HEK293 (cell line): ENCODE measurements at regions of chr17 and their contacts with region 1.

Region 1: DNA sequence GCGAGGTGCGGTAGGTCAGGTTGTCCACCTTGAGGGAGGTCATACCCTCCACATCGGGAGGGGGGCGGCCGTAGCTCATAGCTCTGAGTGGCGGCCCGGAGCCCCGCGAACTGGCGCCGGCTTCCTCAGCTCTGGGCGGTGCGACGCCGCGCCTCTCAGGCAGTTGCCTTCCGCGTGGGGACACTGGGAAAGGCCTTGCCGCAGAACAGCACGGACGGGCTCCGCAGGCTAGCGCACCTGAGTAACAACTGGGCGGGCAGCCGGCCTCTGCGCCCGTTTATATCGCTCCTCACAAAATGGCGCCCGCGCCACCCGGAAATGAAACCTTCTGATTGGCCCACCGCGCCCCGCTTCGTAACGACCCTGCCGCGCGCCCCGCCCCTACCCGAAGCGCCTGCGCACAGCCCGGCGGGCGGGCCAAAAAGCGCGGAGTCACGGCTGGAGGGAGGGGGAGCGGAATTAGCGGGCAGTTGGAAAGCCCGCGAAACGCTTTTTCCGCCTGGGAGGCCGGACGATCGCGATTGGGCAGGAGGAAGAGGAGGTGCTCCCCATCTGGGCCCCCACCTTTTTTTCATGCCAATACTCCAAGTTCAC is at the start of gene SRSF2:
- H3K4me3 ChIP-seq: peak within 1 kb of the TSS; percentile 81
- H3K27ac ChIP-seq: peak within 1 kb of the TSS; percentile 99
- H3K4me1 ChIP-seq: peaks cover 19% of the 10 kb centered on the region
- CTCF ChIP-seq: peak; percentile 54

Region 2: DNA sequence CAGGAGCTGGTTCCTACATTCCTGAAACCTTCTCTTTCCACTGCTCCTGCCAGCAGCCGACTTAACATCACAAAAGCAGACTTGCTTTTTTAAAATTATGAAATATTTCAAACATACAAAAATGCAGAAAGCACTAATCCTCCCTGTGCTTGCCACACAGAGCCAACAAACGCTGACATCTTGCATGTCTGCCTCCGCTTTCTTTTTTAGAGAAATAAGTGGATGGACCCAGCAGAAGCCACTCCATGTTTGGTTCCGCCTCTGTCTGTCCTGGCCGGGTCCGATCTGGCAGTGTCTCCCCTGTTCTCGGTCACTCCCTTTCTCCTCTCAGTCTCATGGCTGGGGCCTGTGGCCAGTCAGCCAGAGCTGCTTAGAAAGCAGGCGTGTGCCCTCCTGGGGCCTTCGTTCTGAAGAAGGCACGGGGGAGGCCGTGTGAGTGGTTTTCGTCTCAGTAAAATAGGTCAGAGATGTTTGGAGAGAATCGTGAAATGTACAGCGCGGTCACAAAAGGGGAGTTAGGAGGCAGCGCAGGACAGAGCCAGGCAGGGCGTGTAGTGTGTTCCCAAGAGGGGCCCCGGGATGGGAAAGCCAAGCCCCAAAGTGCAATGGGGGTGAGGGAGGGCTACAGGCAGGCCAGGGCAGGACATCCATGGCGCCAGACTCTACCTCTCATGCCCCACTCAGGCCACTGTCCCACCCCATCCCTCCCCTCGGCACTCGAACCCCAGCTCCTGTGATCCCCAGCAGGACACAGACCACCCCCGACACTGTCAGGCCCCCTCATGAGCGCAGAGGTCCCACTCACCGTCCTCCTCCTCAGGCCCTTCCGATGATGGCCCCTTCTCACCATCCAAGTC is 49.6 kb before region 1 on chr17:
- CTCF ChIA-PET with region 1: interaction called, 3 read pairs
- POLR2A ChIA-PET with region 1: interaction called, 12 read pairs
- H3K4me3 ChIP-seq: no peak overlapping the region
- H3K27ac ChIP-seq: no peak overlapping the region; the same call in 1 of the 2 replicates
- H3K4me1 ChIP-seq: peaks cover 11% of the 10 kb centered on the region
- CTCF ChIP-seq: no peak

Region 3: DNA sequence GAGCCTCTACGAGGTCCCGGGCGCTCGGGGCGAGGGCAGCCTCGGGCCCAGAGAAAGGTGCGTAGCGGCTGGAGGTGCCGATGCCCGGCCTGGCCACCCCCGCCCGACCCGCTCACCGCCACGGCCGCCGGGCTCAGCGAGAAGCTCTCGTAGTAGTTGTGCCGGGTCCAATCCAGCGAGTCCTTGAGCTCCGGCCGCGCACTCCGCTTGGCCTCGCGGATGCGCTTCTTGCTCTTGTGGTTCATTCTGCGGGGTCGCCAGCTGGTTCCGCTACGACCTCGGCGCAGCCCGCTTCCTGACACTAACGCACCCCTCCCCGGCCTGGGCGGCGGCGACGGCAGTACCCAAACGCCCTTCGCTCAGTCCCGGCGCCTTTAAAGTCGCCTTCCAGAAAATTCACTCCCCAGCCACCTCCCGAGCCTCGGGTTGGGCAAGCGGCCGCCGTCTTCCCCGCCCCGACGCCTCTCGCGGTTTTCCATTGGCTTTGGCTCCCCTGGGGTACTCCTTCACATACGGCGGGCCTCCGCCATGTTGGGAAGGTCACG is 10.9 kb before region 1 on chr17 and contains the start of gene JMJD6:
- CTCF ChIA-PET with region 1: interaction called, 6 read pairs
- POLR2A ChIA-PET with region 1: interaction called, 68 read pairs
- H3K4me3 ChIP-seq: peak within 1 kb of the TSS; percentile 93
- H3K27ac ChIP-seq: peak within 1 kb of the TSS; percentile 97
- H3K4me1 ChIP-seq: peaks cover 7% of the 10 kb centered on the region
- CTCF ChIP-seq: peak; percentile 7; the same call in 1 of the 2 replicates

Region 4: DNA sequence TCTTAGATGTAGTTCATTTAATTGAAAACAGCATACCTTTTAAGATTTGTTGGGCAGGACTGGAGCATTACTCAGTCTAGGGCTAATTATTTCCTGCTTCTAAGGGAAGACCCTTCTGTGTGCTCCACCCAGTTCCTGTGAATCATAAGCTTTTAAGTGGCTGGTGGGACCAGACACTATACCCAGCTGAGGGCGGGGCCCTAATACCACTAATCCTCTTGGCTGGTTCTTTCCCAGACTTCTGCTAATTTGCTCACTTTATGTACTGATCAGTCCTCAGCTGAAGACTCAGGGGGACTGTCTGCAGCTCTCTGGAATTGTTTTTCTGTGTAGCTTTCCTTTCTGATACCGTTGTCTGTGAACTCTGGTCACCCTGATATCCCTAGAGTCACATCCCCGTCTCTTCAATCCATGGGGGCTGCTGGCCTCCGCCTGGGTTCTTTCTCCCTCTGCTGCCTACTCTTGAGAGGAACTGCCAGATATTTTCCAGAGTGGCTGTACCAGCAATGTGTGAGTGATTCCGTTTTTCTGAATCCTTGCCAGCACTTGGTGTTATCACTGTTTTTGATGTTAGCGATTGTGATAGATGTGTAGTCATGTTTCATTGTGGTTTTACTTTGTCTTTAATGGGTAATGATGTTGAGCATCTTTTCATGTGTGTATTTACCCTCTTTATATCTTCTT is 35.8 kb after region 1 on chr17:
- CTCF ChIA-PET with region 1: interaction called, 3 read pairs
- POLR2A ChIA-PET with region 1: interaction called, 16 read pairs
- H3K4me3 ChIP-seq: no peak overlapping the region
- H3K27ac ChIP-seq: peak overlapping the region; percentile 71
- H3K4me1 ChIP-seq: peaks cover 8% of the 10 kb centered on the region
- CTCF ChIP-seq: no peak

Region 5: GRCh38 chr17:76797241-76797840 is 60.2 kb after region 1 on chr17:
- CTCF ChIA-PET with region 1: no interaction called
- POLR2A ChIA-PET with region 1: no interaction called
- H3K4me3 ChIP-seq: no peak overlapping the region
- H3K27ac ChIP-seq: no peak overlapping the region
- H3K4me1 ChIP-seq: no peaks in the 10 kb centered on the region
- CTCF ChIP-seq: no peak